Breast epithelium (tissue), 4 donors: ENCODE measurements at regions of chr15 and their contacts with region 1.

Region 1: GRCh38 chr15:32838820-32839219 is 121.0 kb downstream of the GREM1 start:
- DNase-seq: no peak
- H3K4me3 ChIP-seq: no peak overlapping the region
- H3K27ac ChIP-seq: no peak overlapping the region
- H3K4me1 ChIP-seq: no peaks in the 10 kb centered on the region
- H3K27me3 ChIP-seq: no peaks in the 10 kb centered on the region
- CTCF ChIP-seq: no peak
- POLR2A ChIP-seq: no peak

Region 2: GRCh38 chr15:31752065-31752762 is 1086.6 kb before region 1 on chr15:
- intact Hi-C with region 1: no loop called
- DNase-seq: no peak
- H3K4me3 ChIP-seq: no peak overlapping the region
- H3K27ac ChIP-seq: no peak overlapping the region
- H3K4me1 ChIP-seq: no peaks in the 10 kb centered on the region
- H3K27me3 ChIP-seq: no peaks in the 10 kb centered on the region
- CTCF ChIP-seq: no peak
- POLR2A ChIP-seq: no peak

Region 3: GRCh38 chr15:32790352-32790999 is 48.3 kb before region 1 on chr15:
- intact Hi-C with region 1: no loop called
- DNase-seq: no peak
- H3K4me3 ChIP-seq: no peak overlapping the region
- H3K27ac ChIP-seq: no peak overlapping the region
- H3K4me1 ChIP-seq: no peaks in the 10 kb centered on the region
- H3K27me3 ChIP-seq: no peaks in the 10 kb centered on the region
- CTCF ChIP-seq: no peak
- POLR2A ChIP-seq: no peak

Region 4: DNA sequence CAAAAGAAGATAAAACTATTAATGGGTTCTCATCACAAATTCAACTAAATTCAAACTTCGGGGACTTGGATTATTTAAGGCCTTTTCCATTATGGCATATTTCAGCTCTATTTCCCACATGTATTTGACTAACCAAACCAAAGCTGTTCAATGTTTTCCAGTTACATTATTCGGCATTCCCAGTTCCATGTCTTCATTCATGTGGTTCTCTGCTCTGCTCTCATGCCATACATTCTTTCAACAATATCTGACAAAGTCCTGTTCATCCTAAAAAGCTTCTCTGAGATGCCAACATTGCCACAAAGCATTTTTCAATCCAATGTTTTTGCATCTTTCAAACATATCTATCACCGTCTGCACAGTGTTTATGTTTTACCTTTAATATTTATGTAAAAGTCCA is 20.4 kb after region 1 on chr15:
- intact Hi-C with region 1: no loop called
- DNase-seq: no peak
- H3K4me3 ChIP-seq: no peak overlapping the region
- H3K27ac ChIP-seq: no peak overlapping the region
- H3K4me1 ChIP-seq: no peaks in the 10 kb centered on the region
- H3K27me3 ChIP-seq: no peaks in the 10 kb centered on the region
- CTCF ChIP-seq: no peak
- POLR2A ChIP-seq: no peak

Region 5: GRCh38 chr15:32870240-32871033 is 31.6 kb after region 1 on chr15:
- intact Hi-C with region 1: loop called (anchors 2 kb)
- DNase-seq: no peak
- H3K4me3 ChIP-seq: no peak overlapping the region
- H3K27ac ChIP-seq: no peak overlapping the region
- H3K4me1 ChIP-seq: no peaks in the 10 kb centered on the region
- H3K27me3 ChIP-seq: no peaks in the 10 kb centered on the region
- CTCF ChIP-seq: no peak
- POLR2A ChIP-seq: no peak

Region 6: GRCh38 chr15:33154351-33155166 is 315.7 kb after region 1 on chr15:
- intact Hi-C with region 1: loop called (anchors 5 kb)
- DNase-seq: peak in 1 of 2 donors; percentile 32
- H3K4me3 ChIP-seq: peak overlapping the region in 2 of 3 donors; percentile 25 to 33
- H3K27ac ChIP-seq: no peak overlapping the region
- H3K4me1 ChIP-seq: no peaks in the 10 kb centered on the region
- H3K27me3 ChIP-seq: no peaks in the 10 kb centered on the region
- CTCF ChIP-seq: no peak
- POLR2A ChIP-seq: no peak